Tibial artery (tissue), 4 donors: ENCODE measurements at regions of chrX and their contacts with region 1.

Region 1: DNA sequence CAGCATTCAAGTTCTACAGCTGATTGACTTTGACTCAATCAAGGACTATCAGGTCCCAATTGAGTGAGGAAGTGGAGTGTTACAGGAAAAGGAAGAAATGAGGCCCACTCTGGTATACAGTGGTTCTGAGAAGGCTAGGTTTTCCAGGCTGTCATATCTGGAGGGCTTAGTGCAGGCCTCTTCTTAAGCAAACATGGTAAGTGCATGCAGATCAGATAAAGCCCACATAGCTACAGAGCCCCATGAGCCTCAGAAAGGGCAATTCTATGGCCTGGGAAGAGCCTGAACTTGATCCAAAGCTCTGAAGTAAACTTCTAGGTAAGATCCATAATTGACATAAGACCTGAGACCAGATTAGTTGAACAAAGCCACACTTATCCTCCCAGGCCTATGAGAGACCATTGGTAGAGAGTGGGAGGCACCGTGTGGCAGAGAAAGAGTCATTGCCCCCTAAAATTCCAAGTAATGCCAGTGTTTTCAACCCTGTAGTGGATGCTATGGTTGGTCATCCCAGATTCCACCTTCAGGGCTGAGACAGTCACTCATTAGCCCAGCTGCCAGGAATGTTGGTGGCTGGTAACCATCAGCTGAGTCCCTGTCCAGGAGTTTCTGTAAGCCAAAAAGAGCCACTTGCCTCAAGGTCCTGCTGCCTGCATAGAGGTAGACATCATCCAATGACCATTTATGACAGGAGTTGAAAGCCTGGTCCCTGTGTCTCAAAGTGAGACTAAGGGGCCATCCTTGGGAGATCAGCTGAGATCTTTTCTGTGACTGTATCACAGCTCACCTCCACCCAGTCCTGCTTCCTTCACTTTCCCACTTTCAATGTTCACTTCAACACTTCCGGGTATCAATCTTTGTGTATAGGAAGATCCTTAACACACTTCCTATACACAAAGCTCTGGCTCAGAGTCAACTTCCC is 28.7 kb upstream of the MAOA start:
- DNase-seq: no peak
- H3K4me3 ChIP-seq: no peak overlapping the region
- H3K27ac ChIP-seq: no peak overlapping the region
- H3K4me1 ChIP-seq: peaks cover 0 to 9% (median 0%) of the 10 kb centered on the region in 4 donors
- H3K27me3 ChIP-seq: no peaks in the 10 kb centered on the region
- CTCF ChIP-seq: no peak

Region 2: GRCh38 chrX:43450355-43450754 is 177.1 kb before region 1 on chrX:
- intact Hi-C with region 1: loop called (anchors 5 kb)
- DNase-seq: no peak
- H3K4me3 ChIP-seq: no peak overlapping the region
- H3K27ac ChIP-seq: no peak overlapping the region
- H3K4me1 ChIP-seq: no peaks in the 10 kb centered on the region
- H3K27me3 ChIP-seq: no peaks in the 10 kb centered on the region
- CTCF ChIP-seq: no peak

Region 3: DNA sequence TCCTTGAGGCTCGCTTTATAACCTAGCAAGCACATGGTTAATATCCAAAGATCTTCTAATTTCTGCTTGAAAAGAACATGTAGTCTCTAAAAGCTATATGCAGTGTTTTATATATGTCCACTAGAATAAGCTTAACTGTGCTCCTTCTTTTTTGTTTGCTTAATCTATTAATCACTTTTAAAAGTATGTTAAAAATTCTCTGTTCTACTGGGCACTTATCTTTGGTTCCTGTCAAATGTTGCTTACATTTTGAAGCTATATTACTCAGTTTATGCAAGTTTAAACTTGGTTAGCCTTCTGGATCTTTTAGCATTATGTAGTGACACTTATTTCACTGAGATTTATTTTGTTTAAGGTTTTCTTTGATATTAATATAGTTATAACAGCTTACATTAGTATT is 61.2 kb after region 1 on chrX:
- intact Hi-C with region 1: no loop called
- DNase-seq: no peak
- H3K4me3 ChIP-seq: no peak overlapping the region
- H3K27ac ChIP-seq: no peak overlapping the region
- H3K4me1 ChIP-seq: peaks cover 0 to 42% (median 4%) of the 10 kb centered on the region in 4 donors
- H3K27me3 ChIP-seq: no peaks in the 10 kb centered on the region
- CTCF ChIP-seq: no peak